Right ventricle myocardium inferior (tissue), 1 donor: ENCODE measurements at regions of chr15 and their contacts with region 1.

Region 1: DNA sequence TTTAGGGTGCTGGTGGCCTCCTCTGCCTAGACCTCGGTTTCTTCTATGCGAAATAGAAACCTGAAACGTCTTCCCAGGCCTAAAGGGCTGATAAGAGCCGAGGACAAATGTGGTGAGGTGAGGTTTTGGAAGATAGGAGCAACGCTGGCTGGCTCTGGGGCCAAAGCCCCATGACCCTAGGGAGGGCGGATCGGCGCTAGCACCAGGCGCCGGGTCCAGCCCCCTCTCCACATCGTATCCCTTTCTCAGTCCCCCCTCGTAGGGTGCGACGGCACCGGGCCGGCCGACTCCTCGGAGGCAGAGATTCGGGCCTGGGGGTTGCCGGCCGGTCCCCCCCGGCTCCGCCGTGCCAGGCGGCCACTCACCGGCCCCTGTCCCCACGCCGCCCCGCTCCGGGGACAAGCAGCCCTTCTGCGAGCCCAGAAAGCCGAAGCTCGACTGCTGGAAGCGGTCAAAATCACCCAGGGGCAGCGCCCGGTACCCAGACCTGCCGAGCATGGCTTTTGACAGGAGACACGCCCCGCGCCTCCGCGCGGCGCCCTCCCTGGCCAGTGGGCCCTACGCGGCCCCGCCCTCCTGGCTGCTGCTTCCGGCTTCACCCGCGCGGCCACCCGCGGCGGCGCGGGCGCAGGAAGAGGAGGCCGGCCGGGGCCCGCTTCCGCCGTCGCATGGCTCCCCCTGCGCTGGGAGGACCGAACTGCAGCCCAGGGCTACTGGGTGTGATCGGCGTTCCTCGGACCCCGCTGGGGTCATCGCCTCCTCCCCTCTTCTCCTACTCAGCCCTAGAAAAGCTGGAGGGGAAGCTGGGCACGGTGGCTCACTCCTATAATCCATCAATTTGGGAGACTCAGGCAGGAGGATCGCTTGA is at the start of gene STOML1:
- DNase-seq: peak; percentile 98
- ATAC-seq: peak; percentile 93
- total RNA-seq, gene STOML1: 31.2 TPM

Region 2: DNA sequence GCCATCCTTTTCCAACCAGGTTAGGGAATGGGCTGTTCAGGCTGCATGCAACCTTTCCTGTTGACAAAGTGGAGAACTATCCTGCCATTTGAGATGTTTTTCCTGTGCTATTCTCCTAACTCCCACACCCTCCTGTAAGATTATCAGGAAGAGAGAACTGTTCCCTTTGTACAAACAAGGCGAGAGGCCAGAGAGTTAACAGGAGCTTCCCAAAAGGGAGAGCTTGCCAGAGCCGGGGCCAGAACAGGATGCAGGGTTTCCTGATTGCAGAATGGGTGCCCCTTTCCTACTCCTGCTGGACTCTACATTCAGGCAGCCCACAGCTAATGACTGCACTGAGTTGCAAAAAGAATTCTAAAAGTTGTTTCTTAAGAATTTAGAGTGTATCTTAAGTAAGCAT is 19.6 kb after region 1 on chr15:
- intact Hi-C with region 1: loop called (anchors 1 kb)
- DNase-seq: no peak
- ATAC-seq: peak; percentile 81

Region 3: GRCh38 chr15:74044267-74045110 is 52.5 kb after region 1 on chr15:
- intact Hi-C with region 1: loop called (anchors 5 kb)
- DNase-seq: peak; percentile 84
- ATAC-seq: peak; percentile 62